ENCODE measurements at regions of chrX and their contacts with region 1.

Region 1: GRCh38 chrX:100625985-100626491 is 10.6 kb downstream of the TSPAN6 start:
- DNase-seq: no peak
- ATAC-seq: no peak
- H3K4me3 ChIP-seq: no peak overlapping the region
- H3K27ac ChIP-seq: no peak overlapping the region
- H3K4me1 ChIP-seq: no peaks in the 10 kb centered on the region
- H3K27me3 ChIP-seq: no peaks in the 10 kb centered on the region
- CTCF ChIP-seq: no peak
- POLR2A ChIP-seq: no peak
- RAD21 ChIP-seq: no peak

Region 2: DNA sequence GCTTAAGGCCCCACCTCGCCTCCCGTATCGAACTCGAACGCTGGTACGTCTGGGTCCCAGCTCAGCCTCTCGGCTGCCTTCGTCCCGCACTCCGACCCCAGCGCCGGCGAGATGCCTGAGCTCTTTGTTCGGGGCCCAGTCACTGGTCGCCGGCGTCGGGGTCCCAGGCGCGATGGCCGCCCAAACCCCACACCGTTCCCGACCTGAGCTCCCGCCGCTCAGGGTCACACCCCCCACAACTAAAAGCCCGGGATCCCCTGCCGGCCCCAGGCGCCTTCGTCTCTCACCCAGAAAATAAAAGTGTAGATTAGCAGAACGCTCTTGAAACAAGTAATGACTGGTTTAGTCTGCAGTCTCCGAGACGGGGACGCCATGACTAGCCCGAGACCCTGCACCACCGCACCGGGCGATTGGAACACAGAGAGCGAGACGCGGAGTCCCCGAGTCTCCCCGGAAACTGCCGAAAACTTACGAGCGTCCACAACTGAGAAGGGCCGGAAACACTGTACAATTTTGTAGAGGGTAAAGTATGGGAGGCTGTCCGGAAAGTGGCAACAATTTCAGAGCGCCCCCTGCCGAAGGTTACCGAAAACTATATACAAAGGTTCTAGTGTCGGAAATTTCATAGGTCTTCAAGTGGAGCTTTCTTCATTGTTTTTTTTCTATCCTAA is 10.4 kb after region 1 on chrX and contains the start of gene TSPAN6:
- CTCF ChIA-PET with region 1: interaction called, 11 read pairs
- POLR2A ChIA-PET with region 1: no interaction called
- RAD21 ChIA-PET with region 1: no interaction called
- intact Hi-C with region 1: no loop called
- DNase-seq: peak; percentile 81
- ATAC-seq: peak; percentile 99
- H3K4me3 ChIP-seq: peak within 1 kb of the TSS; percentile 61 to 66
- H3K27ac ChIP-seq: peak within 1 kb of the TSS; percentile 52; the same call in 1 of the 2 replicates
- H3K4me1 ChIP-seq: peaks cover 0 to 9% of the 10 kb centered on the region in 2 experiments; a peak in 1 of 4 replicates
- H3K27me3 ChIP-seq: no peaks in the 10 kb centered on the region
- CTCF ChIP-seq: peak; percentile 45 to 58 (median 49); a peak in 5 of 6 replicates
- POLR2A ChIP-seq: no peak
- RAD21 ChIP-seq: peak; percentile 46
- total RNA-seq, gene TSPAN6: 25.0 TPM